Astrocyte of the cerebellum (primary cell): ENCODE measurements at regions of chr9 and their contacts with region 1.

Region 1: GRCh38 chr9:98848450-98849149 is 41.1 kb downstream of the GALNT12 start:
- DNase-seq: peak; percentile 78
- H3K4me3 ChIP-seq: no peak overlapping the region
- CTCF ChIP-seq: peak; percentile 94

Region 2: GRCh38 chr9:98974994-98975712 is 126.6 kb after region 1 on chr9:
- in situ Hi-C with region 1: loop called (anchors 10 kb)
- DNase-seq: peak; percentile 68
- H3K4me3 ChIP-seq: no peak overlapping the region
- CTCF ChIP-seq: peak; percentile 100

Region 3: DNA sequence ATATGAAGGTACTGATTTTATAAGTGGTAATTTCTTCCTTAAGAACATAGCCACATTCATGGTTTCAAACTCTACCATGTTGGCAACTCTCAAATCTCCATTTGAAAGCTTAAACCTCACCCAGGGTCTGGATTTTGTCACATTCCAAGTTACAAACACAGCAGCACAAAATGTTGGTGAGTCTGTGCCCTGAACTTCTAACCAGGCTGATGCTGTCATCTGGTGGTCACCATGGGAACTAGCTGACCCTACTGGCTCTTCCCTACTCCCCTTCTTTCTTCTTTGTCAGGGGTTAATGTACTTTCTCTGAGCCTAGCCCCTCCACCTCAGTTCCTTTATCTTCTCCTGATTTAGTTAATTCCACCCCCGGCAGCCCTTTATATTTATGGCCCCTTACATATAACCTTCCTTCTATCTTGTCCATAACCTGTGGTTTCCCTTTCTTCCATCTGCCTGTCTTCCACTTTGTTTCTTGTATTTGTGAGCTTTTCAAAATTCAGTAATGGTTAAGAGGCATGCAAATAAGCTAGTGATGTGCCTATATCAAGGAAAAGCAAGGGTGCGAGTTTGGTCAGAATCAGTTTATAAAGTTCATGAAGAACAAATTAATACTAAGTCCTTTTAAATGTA is 292.2 kb after region 1 on chr9:
- in situ Hi-C with region 1: loop called (anchors 5 kb)
- DNase-seq: peak; percentile 55
- H3K4me3 ChIP-seq: no peak overlapping the region
- CTCF ChIP-seq: peak; percentile 96